ENCODE measurements at regions of chr22 and their contacts with region 1.

Region 1: DNA sequence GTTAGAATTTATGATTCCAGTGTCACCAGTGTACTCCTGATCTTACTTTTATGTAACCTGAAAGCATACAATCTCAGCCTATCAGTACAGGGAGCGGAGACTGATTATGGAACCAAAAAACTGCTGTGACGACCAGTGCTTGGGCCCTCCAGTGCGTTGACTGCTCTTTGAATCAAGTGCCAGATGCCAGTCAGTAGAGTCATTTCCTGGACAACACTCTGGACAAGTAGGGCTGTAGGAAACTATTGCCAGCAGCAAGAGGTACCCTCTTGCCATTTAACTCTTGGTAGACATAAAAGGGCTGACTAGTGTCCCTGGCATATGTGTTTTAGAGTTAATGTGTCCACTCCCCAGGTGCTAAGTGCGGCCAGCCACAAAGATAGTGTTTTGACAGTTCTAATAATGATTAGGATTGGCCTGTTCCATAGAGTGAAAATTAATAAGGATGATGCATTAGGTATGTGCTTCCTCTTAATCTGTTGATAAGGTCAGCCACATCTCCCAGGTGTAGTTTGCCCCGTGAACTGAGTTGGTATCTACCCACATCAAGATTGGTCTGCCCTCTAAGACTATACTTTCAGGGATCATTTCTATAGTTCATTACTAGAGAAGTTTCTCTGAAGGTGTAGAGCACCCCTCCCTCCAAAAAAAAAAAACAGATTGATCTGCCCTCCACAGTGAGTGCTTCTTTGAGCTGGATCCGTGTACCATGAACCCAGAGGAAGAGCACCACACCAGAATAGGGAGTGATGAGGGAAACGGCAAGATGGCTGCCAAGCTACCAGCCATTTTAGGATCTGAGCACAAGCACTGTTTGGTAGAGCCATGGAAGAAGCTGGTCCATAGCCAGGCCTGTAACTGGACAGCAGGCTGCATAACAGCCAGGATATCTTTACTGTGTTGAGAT is 20.7 kb upstream of the AIFM3 start:
- DNase-seq: no peak
- H3K4me3 Mint-ChIP-seq: no peak overlapping the region
- H3K27ac Mint-ChIP-seq: peak overlapping the region; percentile 11
- H3K4me1 Mint-ChIP-seq: peaks cover 61% of the 10 kb centered on the region
- H3K27me3 Mint-ChIP-seq: no peaks in the 10 kb centered on the region

Region 2: DNA sequence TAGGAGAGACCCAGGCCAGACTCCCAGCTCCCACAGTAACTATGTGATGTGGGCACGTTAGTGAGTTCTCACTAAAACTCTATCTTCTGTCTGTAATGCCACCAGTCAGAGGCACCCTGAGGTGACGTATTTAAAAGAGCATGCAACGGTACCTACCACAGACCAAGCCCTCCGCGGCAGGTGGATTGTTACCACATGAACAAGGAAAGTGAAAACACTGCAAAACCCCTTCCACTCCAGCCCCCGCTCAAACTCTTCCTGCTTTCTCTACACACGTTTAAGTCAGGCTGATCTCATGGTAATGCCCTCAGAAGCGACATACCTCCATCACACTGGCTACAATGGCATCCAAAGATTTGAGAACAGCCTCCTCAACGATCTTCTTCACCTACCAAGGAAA is 135.7 kb before region 1 on chr22:
- CTCF ChIA-PET with region 1: no interaction called
- intact Hi-C with region 1: loop called (anchors 10 kb)
- DNase-seq: peak; percentile 40
- H3K4me3 Mint-ChIP-seq: no peak overlapping the region
- H3K27ac Mint-ChIP-seq: peak overlapping the region; percentile 64
- H3K4me1 Mint-ChIP-seq: peaks cover 12% of the 10 kb centered on the region
- H3K27me3 Mint-ChIP-seq: no peaks in the 10 kb centered on the region

Measured in activated naive CD4-positive, alpha-beta T cell treated with anti-CD3 and anti-CD28 coated beads for 36 hours (primary cell).